Thyroid gland (tissue), 4 donors: ENCODE measurements at regions of chr1 and their contacts with region 1.

Region 1: DNA sequence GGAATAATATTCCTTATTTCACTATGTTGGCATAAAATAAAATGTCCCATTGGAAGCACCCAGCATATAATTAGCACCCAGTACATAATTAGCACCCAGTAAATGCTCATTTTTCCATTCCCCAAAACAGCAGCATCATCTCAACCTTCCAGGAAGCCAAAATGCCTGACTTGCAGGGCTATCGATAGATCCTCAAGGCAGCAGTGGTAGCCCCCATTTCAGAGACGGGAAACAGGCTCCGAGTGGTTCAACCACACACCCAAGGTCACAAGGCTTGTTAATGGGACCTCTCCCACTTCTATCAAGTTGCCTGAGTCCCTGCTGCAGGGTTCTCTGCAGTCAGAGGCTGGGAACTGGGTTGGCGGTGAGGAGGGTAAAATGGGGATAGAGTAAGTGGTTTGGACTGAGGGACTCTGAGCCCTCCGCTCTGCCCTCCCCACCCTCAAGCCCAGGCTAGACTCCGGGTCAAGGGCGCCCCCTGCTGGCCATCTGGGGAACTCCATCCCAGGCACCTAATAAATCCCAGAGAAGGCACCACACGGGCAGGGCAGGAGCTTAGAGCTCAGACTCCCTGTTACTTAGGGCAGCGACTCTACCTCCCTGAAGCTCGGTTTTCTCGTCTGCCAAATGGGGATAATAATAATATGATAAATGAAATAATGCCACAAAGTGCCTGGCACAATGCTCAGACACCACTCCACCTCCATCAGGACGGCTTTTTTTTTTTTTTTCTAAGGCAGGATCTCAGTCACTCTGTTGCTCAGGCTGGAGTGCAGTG is 21.9 kb upstream of the LAPTM5 start:
- DNase-seq: peak; percentile 82 to 86
- H3K4me3 ChIP-seq: no peak overlapping the region
- H3K27ac ChIP-seq: no peak overlapping the region
- H3K4me1 ChIP-seq: peaks cover 3 to 4% of the 10 kb centered on the region in 2 donors
- H3K27me3 ChIP-seq: no peaks in the 10 kb centered on the region
- CTCF ChIP-seq: peak; percentile 95 to 98 (median 96)
- POLR2A ChIP-seq: no peak

Region 2: DNA sequence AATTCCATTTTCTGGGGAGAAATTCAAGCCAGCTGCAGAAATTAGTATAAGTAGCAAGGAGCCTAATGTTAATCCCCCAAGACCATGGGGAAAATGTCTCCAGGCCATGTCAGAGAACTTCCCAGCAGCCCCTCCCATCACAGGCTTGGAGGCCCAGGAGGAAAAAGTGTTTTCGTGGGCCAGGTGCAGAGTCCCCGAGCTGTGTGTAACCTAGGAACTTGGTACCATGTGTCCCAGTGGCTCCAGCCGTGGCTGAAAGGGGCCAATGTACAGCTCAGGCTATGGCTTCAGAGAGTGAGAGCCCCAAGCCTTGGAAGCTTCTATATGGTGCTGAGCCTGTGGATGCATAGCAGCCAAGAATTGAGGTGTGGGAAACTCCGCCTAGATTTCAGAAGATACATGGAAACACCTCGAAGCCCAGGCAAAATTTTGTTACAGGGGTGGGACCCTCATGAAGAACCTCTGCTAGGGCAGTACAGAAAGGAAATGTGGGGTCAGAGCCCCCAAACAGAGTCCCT is 342.4 kb before region 1 on chr1:
- intact Hi-C with region 1: no loop called
- DNase-seq: no peak
- H3K4me3 ChIP-seq: no peak overlapping the region
- H3K27ac ChIP-seq: no peak overlapping the region
- H3K4me1 ChIP-seq: no peaks in the 10 kb centered on the region
- H3K27me3 ChIP-seq: no peaks in the 10 kb centered on the region
- CTCF ChIP-seq: no peak
- POLR2A ChIP-seq: no peak

Region 3: GRCh38 chr1:30719406-30720270 is 59.8 kb before region 1 on chr1:
- intact Hi-C with region 1: loop called (anchors 2 kb)
- DNase-seq: no peak
- H3K4me3 ChIP-seq: peak overlapping the region in 1 of 3 donors; percentile 52
- H3K27ac ChIP-seq: peak overlapping the region in 2 of 3 donors; percentile 98 to 99
- H3K4me1 ChIP-seq: peaks cover 12 to 23% of the 10 kb centered on the region in 2 donors
- H3K27me3 ChIP-seq: no peaks in the 10 kb centered on the region
- CTCF ChIP-seq: no peak
- POLR2A ChIP-seq: no peak

Region 4: DNA sequence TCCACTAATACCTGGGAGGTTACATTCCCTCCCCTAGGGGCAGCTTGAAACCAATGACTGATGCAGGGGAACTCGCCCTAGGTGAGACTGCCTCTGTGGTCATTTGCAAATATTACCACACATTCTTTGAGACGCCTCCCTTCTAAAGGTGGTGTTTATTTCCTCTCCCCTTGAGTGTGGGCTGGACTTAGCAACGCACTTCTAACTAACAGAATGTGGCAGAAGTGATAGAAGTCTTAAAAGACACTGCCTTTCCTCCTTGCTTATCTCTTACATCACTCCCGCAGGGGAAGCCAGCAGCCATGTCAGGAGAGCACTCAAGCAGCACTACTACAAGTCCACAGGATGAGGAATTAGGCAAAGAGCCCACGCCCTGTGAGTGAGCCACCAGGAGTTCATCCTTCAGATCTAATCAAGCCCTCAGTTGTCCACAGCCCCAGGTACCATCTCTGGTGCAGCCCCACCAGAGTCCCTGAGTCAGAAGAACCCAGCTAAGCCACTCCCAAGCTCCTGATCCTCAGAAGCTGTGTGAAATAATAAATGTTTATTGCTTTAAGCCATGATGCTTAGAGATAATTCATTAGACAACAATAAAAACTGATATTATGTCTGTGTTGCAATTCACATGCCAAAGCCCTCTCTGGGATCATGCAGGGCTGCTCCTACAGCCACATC is 41.3 kb before region 1 on chr1:
- intact Hi-C with region 1: loop called (anchors 5 kb)
- DNase-seq: no peak
- H3K4me3 ChIP-seq: no peak overlapping the region
- H3K27ac ChIP-seq: no peak overlapping the region
- H3K4me1 ChIP-seq: peaks cover 22 to 25% of the 10 kb centered on the region in 2 donors
- H3K27me3 ChIP-seq: no peaks in the 10 kb centered on the region
- CTCF ChIP-seq: no peak
- POLR2A ChIP-seq: no peak

Region 5: GRCh38 chr1:31065310-31066217 is 286.1 kb after region 1 on chr1 and contains the start of gene PUM1:
- intact Hi-C with region 1: no loop called
- DNase-seq: peak; percentile 100
- H3K4me3 ChIP-seq: peak within 1 kb of the TSS; percentile 4 to 77 (median 37)
- H3K27ac ChIP-seq: peak within 1 kb of the TSS; percentile 95 to 97 (median 95)
- H3K4me1 ChIP-seq: peaks cover 28 to 30% of the 10 kb centered on the region in 2 donors
- H3K27me3 ChIP-seq: no peaks in the 10 kb centered on the region
- CTCF ChIP-seq: peak in 3 of 6 experiments; percentile 7 to 45 (median 23)
- POLR2A ChIP-seq: peak; percentile 77 to 91
- total RNA-seq, gene PUM1: 118 to 191 (median 132) TPM

Region 6: DNA sequence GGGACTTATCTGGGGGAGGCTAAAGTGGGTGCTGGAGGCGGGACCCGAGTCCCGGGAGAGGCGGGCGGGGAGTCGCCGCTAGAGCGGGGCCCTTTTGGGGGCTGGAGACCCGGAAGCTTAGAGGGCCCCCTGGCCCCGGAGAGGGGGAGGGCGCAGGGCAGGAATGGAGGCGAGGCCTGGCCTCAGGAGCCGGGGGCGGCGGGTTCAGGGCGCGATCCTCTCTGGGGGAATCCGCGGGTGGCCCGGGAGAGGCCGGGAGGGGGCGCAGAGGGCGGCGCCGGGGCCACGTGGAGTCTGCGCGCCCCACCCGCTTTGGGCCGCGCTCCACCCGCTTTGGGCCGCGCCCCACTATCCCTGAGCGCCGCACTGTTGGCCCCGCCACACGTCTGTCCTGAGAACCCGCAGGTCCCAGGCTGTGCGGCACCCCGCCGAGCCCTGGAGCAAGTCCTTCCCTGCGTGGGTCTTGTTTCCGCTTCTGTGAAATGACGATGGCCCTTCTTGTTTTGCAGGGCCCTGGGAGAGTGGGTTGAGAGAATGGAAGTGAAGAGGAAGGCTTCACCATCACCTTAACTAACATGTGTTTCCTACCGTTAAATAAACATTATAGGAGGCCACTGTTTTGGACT is 375.8 kb after region 1 on chr1:
- intact Hi-C with region 1: no loop called
- DNase-seq: peak; percentile 58 to 72
- H3K4me3 ChIP-seq: peak overlapping the region in 2 of 3 donors; percentile 62 to 67
- H3K27ac ChIP-seq: peak overlapping the region; percentile 63 to 85 (median 77)
- H3K4me1 ChIP-seq: peaks cover 3 to 15% of the 10 kb centered on the region in 2 donors
- H3K27me3 ChIP-seq: no peaks in the 10 kb centered on the region
- CTCF ChIP-seq: peak in 3 of 6 experiments; percentile 8 to 36 (median 27)
- POLR2A ChIP-seq: no peak